GM12878 (cell line): ENCODE measurements at regions of chr15 and their contacts with region 1.

Region 1: DNA sequence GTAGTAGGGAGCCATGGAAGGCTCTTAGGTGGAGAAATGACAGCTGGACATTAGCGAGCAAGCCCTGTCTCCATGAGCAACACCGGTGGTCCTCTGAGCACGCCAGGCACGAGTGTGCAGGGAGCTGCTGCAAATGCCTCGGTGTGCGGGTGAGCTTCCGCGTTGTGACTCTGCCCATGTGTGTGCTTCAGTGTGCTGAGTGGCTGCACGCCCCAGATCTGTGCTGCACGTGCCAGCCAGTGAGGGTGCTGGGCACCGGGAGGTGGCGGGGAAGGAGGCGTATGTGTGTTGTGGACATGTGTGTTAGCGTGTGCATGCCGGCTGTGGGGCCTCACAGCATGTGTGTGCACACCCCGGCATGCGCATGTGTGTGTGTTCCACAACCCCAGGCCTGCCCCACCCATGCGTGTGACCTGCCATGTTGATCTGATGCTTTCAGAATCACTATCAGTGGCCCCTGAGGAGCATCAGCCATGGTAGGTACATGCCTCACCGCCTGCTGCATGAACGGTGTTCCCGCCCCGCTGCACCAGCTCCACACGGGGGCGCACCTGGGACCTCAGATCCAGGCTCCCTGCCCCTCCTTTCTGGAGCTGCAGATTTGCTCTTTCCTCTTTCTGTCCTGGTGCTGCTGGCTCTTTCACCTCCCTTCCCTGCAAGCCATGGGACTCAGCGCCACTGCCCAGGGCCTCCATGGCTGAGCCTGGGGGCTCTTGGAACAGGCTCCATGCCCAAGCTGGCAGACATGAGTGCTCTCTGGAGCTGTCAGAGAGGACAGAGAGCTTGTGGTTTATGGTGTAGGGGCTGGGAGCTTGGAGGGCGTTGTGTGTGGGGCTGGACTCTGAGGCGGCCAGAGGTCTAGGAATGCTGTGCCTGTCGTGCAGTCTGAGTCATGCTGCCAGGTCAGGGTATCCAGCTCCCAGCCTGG is 169.4 kb downstream of the TBC1D2B start:
- DNase-seq: no peak
- ATAC-seq: peak; percentile 83
- H3K4me3 ChIP-seq: no peak overlapping the region
- H3K27ac ChIP-seq: no peak overlapping the region
- H3K4me1 ChIP-seq: no peaks in the 10 kb centered on the region
- H3K27me3 ChIP-seq: no peaks in the 10 kb centered on the region; a peak in 1 of 4 replicates
- CTCF ChIP-seq: peak; percentile 37 to 59 (median 46)
- EP300 ChIP-seq: no peak
- POLR2A ChIP-seq: no peak
- RAD21 ChIP-seq: no peak

Region 2: GRCh38 chr15:76625267-76625666 is 1282.8 kb before region 1 on chr15:
- CTCF ChIA-PET with region 1: no interaction called
- POLR2A ChIA-PET with region 1: no interaction called
- RAD21 ChIA-PET with region 1: no interaction called
- SMC1A ChIA-PET with region 1: no interaction called
- in situ Hi-C with region 1: no loop called
- intact Hi-C with region 1: no loop called
- DNase-seq: no peak
- ATAC-seq: peak; percentile 61
- H3K4me3 ChIP-seq: no peak overlapping the region
- H3K27ac ChIP-seq: no peak overlapping the region
- H3K4me1 ChIP-seq: no peaks in the 10 kb centered on the region
- H3K27me3 ChIP-seq: no peaks in the 10 kb centered on the region
- CTCF ChIP-seq: peak in 1 of 3 experiments; percentile 26; a peak in 3 of 6 replicates
- EP300 ChIP-seq: no peak
- POLR2A ChIP-seq: no peak
- RAD21 ChIP-seq: no peak

Region 3: DNA sequence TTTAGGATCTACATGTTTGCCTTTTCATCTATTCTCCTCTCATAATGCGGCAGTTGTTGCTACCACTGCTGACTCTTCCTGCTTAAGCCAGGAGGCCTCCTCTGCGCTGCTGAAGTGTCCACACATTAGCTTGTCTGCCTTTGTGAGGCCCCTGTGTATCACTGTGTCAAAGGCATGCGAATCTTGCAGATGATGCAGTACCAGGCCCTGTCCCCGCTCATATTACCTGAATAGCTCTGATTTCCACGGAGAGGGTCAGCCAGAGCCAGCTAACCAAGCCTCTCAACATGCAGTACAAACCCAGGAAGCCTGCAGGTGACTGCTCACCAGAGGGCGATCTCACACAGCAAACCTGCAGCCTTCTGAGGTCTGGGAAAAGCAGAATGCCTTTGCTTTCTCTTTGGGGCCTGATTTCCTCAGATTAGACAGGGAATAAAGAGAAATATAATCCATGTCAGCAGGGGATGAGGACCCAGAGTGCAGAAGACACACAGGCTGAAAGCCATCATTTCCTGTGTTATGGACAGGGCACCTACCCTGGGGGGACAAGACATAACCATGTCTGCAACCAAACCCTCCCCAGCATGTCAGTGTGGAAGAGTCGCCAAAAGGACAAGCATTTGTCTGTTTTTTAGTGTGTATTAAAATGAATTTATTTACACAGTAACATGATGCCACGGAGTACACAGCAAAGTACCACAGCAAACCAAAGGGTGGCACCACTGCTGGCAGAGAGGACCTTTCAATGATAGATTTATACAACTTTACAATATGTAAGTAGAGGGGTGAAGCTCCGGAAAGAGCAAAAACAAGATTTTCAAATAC is 800.3 kb before region 1 on chr15:
- CTCF ChIA-PET with region 1: no interaction called
- POLR2A ChIA-PET with region 1: no interaction called
- RAD21 ChIA-PET with region 1: no interaction called
- SMC1A ChIA-PET with region 1: no interaction called
- in situ Hi-C with region 1: no loop called
- intact Hi-C with region 1: no loop called
- DNase-seq: no peak
- ATAC-seq: peak; percentile 82
- H3K4me3 ChIP-seq: no peak overlapping the region
- H3K27ac ChIP-seq: no peak overlapping the region
- H3K4me1 ChIP-seq: no peaks in the 10 kb centered on the region
- H3K27me3 ChIP-seq: no peaks in the 10 kb centered on the region
- CTCF ChIP-seq: peak; percentile 61 to 76 (median 69)
- EP300 ChIP-seq: no peak
- POLR2A ChIP-seq: no peak
- RAD21 ChIP-seq: peak; percentile 78

Region 4: GRCh38 chr15:77856718-77857346 is 51.3 kb before region 1 on chr15:
- CTCF ChIA-PET with region 1: interaction called, 12 read pairs
- POLR2A ChIA-PET with region 1: no interaction called
- RAD21 ChIA-PET with region 1: no interaction called
- SMC1A ChIA-PET with region 1: no interaction called
- in situ Hi-C with region 1: no loop called
- intact Hi-C with region 1: no loop called
- DNase-seq: no peak
- ATAC-seq: no peak
- H3K4me3 ChIP-seq: no peak overlapping the region
- H3K27ac ChIP-seq: no peak overlapping the region
- H3K4me1 ChIP-seq: no peaks in the 10 kb centered on the region
- H3K27me3 ChIP-seq: peaks cover 0 to 2% of the 10 kb centered on the region in 2 experiments; a peak in 2 of 4 replicates
- CTCF ChIP-seq: no peak
- EP300 ChIP-seq: no peak
- POLR2A ChIP-seq: no peak
- RAD21 ChIP-seq: no peak

Region 5: DNA sequence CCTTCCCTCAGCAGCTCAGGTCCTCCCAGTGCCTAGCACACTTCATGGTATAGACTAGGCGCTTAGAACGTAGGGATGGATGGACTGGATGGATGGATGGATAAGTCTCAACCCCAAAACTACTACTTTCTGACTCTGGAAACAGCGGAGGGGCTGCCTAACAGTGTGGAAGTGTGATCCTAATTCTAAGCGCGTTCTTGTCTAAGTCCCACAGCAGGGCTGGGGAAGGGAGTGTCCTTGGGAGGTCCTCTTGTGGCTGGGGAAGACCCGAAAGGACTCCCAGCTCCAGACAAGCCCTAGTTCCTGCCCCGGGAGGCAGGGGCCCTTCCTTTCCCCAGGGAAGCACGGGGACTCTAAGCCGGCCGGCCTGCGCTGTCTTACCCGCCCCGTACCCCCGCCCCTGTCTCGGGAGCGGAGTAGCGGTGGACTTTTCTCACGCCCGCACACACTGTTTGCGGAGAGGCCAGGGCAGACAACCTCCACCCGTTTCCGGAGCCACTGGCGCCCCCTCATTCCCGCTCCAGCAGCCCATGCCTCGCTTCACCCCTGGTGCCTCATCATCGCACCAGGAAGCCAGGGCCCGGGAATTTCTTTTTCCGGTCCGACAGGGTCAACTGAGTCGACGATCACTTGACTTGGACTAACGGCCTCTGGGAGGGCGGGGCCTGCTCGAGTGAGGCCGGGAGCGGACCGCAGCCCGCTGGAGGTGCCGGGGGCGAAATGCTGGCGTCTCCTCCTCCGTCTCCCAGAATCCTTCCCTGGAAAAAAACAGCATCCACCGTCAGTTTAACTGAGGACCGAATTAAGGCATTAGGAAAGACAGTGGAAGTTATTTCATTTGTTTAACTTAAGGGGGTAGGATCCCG is 36.1 kb after region 1 on chr15:
- CTCF ChIA-PET with region 1: interaction called, 12 read pairs
- POLR2A ChIA-PET with region 1: interaction called, 3 read pairs
- RAD21 ChIA-PET with region 1: no interaction called
- SMC1A ChIA-PET with region 1: no interaction called
- in situ Hi-C with region 1: no loop called
- intact Hi-C with region 1: no loop called
- DNase-seq: no peak
- ATAC-seq: peak; percentile 91
- H3K4me3 ChIP-seq: peak overlapping the region; percentile 50; the same call in 1 of the 2 replicates
- H3K27ac ChIP-seq: no peak overlapping the region
- H3K4me1 ChIP-seq: no peaks in the 10 kb centered on the region
- H3K27me3 ChIP-seq: no peaks in the 10 kb centered on the region
- CTCF ChIP-seq: no peak
- EP300 ChIP-seq: no peak
- POLR2A ChIP-seq: peak; percentile 40; the same call in 1 of the 2 replicates
- RAD21 ChIP-seq: no peak

Region 6: GRCh38 chr15:77959432-77959879 is 51.4 kb after region 1 on chr15:
- CTCF ChIA-PET with region 1: interaction called, 12 read pairs
- POLR2A ChIA-PET with region 1: no interaction called
- RAD21 ChIA-PET with region 1: interaction called, 6 read pairs
- SMC1A ChIA-PET with region 1: interaction called, 5 read pairs
- in situ Hi-C with region 1: no loop called
- intact Hi-C with region 1: loop called (anchors 10 kb)
- DNase-seq: peak; percentile 13
- ATAC-seq: peak; percentile 98
- H3K4me3 ChIP-seq: peak overlapping the region; percentile 39; the same call in 1 of the 2 replicates
- H3K27ac ChIP-seq: no peak overlapping the region
- H3K4me1 ChIP-seq: peaks cover 6% of the 10 kb centered on the region
- H3K27me3 ChIP-seq: no peaks in the 10 kb centered on the region
- CTCF ChIP-seq: peak; percentile 93 to 98 (median 95)
- EP300 ChIP-seq: no peak
- POLR2A ChIP-seq: no peak
- RAD21 ChIP-seq: peak; percentile 93